Heart right ventricle (tissue), 16 donors: ENCODE measurements at regions of chr11 and their contacts with region 1.

Region 1: GRCh38 chr11:73965076-73965860 is 14.4 kb downstream of the DNAJB13 start:
- DNase-seq: no peak
- ATAC-seq: peak in 3 of 8 donors; percentile 26 to 62 (median 45)
- H3K4me3 ChIP-seq: no peak overlapping the region
- H3K27ac ChIP-seq: no peak overlapping the region
- H3K4me1 ChIP-seq: peaks cover 0 to 15% (median 8%) of the 10 kb centered on the region in 9 donors
- H3K27me3 ChIP-seq: peaks cover 0 to 4% (median 0%) of the 10 kb centered on the region in 7 donors
- CTCF ChIP-seq: no peak

Region 2: DNA sequence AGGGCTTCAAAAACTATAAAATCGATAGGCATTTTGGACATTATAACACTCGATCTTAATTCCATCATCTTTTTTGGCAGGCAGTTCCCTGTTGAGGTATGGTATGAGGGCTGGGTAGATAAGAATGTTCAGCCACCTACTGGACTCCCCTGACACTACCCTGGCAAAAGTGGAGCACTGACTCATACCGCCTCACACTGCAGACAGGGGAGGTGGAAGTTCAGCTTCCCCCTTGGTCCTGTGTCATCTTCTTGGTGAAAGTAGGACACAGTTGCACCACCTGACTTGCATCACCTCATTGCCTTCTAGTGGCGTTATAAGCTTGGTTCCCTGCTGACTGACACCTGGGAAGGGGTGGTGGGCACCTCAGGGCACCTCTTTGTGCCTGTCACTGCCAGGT is 58.1 kb before region 1 on chr11:
- intact Hi-C with region 1: no loop called
- DNase-seq: peak in 1 of 2 donors; percentile 16
- ATAC-seq: peak; percentile 49 to 99 (median 85)
- H3K4me3 ChIP-seq: no peak overlapping the region
- H3K27ac ChIP-seq: no peak overlapping the region
- H3K4me1 ChIP-seq: peaks cover 0 to 10% (median 0%) of the 10 kb centered on the region in 9 donors
- H3K27me3 ChIP-seq: no peaks in the 10 kb centered on the region
- CTCF ChIP-seq: peak in 6 of 9 donors; percentile 22 to 38 (median 28)

Region 3: DNA sequence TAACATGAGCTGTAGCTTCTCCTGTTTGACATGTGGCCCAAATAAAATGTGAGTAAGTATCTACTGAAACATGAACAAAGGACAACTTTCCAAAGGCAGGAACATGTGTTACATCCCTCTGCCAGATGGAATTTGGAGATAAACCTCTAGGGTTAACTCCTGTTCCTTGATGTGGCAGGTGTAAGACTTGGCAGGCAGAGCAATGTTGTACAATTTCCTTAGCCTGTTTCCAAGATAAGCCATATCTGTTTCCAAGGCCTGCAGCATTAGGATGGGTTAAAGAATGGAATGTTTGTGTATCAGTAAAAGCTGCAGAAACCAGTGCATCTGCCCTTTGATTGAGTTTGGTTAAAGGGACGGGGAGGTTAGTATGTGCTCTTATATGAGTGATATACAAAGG is 23.3 kb before region 1 on chr11:
- intact Hi-C with region 1: no loop called
- DNase-seq: no peak
- ATAC-seq: no peak
- H3K4me3 ChIP-seq: no peak overlapping the region
- H3K27ac ChIP-seq: no peak overlapping the region
- H3K4me1 ChIP-seq: no peaks in the 10 kb centered on the region
- H3K27me3 ChIP-seq: no peaks in the 10 kb centered on the region
- CTCF ChIP-seq: no peak

Region 4: GRCh38 chr11:73982969-73983740 is 17.9 kb after region 1 on chr11:
- intact Hi-C with region 1: loop called in 1 of 10 experiments (anchors 2 kb)
- DNase-seq: peak; percentile 93
- ATAC-seq: peak; percentile 92 to 97 (median 96)
- H3K4me3 ChIP-seq: peak overlapping the region; percentile 26 to 88 (median 64)
- H3K27ac ChIP-seq: peak overlapping the region; percentile 55 to 94 (median 81)
- H3K4me1 ChIP-seq: peaks cover 0 to 52% (median 15%) of the 10 kb centered on the region in 9 donors
- H3K27me3 ChIP-seq: no peaks in the 10 kb centered on the region
- CTCF ChIP-seq: no peak

Region 5: DNA sequence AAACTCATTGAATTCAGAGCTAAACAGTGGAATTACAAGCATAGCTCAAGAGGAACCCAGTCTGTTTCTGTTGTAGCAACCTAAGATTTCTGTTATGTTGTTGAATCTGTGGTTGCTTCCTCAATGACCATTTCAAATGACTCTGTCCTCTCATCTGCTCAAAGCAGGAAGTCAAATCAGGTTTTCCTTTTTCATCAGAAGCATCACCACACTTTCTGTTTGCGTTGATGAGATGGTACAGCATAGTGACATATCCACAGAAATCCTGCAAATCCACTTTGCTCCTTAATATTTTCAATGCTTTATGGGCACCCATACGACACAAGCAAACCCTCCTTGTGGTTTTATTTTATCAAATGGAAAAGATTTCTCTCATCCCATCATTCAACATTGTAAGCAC is 30.0 kb after region 1 on chr11:
- intact Hi-C with region 1: no loop called
- DNase-seq: no peak
- ATAC-seq: peak in 7 of 8 donors; percentile 43 to 82 (median 63)
- H3K4me3 ChIP-seq: no peak overlapping the region
- H3K27ac ChIP-seq: peak overlapping the region in 1 of 10 donors; percentile 81
- H3K4me1 ChIP-seq: peaks cover 0 to 9% (median 0%) of the 10 kb centered on the region in 9 donors
- H3K27me3 ChIP-seq: no peaks in the 10 kb centered on the region
- CTCF ChIP-seq: no peak

Region 6: DNA sequence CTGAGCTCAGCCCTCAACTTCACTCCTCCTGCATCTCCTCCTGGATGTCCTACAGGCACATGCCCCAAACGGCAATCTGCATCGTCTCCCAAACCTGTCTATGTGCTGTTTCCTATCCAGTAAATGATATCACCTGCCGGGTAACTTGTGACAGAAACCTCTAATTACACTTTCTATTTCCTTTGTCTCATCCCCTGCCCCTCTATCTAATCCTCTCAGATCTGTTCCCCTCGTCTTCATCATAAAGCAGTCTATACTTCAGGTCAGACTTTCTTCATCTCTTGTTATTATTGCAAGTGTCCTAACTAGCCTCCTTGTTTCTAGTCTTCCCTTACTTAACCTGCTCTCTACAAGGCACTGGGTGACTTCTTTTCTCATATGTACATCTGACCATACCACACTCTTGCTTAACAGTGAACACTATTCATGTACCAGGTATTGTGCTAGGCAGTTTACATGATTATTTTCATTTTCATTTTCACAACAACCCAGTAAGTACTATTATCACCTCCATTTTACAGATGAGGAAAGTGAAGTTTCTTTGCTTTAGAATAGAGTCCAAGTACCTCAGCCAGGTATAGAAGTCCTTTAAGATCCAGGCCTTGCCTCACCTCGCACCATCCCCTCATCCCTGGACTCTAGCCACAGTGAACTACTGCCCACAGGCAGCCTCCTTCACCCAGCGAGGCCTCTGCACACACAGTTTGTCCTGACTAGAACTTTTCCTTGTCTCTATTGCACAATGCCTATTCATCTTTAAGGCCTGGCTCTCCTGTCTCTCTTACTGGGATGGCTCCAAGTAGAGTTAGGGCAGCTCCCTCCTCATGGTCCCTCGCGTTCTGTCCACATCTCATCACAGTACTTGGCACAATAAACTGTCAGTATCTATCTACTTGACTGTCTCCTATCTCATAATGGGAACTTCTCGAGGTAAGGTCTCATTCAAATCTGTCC is 65.7 kb after region 1 on chr11:
- intact Hi-C with region 1: loop called in 4 of 10 experiments (anchors 5 to 10 kb)
- DNase-seq: no peak
- ATAC-seq: peak in 1 of 8 donors; percentile 44
- H3K4me3 ChIP-seq: no peak overlapping the region
- H3K27ac ChIP-seq: peak overlapping the region in 1 of 10 donors; percentile 5
- H3K4me1 ChIP-seq: peaks cover 0 to 9% (median 0%) of the 10 kb centered on the region in 9 donors
- H3K27me3 ChIP-seq: no peaks in the 10 kb centered on the region
- CTCF ChIP-seq: no peak

Region 7: GRCh38 chr11:74055938-74056337 is 90.7 kb after region 1 on chr11:
- intact Hi-C with region 1: loop called in 1 of 10 experiments (anchors 10 kb)
- DNase-seq: no peak
- ATAC-seq: no peak
- H3K4me3 ChIP-seq: no peak overlapping the region
- H3K27ac ChIP-seq: no peak overlapping the region
- H3K4me1 ChIP-seq: no peaks in the 10 kb centered on the region
- H3K27me3 ChIP-seq: no peaks in the 10 kb centered on the region
- CTCF ChIP-seq: no peak

Region 8: DNA sequence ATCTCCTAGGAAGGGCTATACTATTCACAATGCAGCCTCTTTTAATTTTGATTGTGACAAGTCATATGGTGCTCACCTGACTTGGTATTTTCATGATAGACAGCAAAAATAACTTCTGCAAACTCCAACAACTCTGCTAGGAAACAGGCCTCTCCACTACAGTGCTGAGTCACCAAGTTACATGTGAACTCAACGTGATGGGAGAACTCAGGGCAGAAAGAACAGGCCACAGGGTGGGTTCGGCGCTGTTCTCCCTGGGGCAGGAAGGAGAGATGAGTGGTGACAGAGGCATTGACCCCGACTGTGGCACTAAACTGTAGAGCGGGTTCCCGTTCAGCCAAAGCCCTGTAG is 120.2 kb after region 1 on chr11:
- intact Hi-C with region 1: loop called in 4 of 10 experiments (anchors 10 kb)
- DNase-seq: no peak
- ATAC-seq: peak in 2 of 8 donors; percentile 12 to 16
- H3K4me3 ChIP-seq: no peak overlapping the region
- H3K27ac ChIP-seq: no peak overlapping the region
- H3K4me1 ChIP-seq: no peaks in the 10 kb centered on the region
- H3K27me3 ChIP-seq: no peaks in the 10 kb centered on the region
- CTCF ChIP-seq: no peak